ENCODE measurements at regions of chr3 and their contacts with region 1.

Region 1: DNA sequence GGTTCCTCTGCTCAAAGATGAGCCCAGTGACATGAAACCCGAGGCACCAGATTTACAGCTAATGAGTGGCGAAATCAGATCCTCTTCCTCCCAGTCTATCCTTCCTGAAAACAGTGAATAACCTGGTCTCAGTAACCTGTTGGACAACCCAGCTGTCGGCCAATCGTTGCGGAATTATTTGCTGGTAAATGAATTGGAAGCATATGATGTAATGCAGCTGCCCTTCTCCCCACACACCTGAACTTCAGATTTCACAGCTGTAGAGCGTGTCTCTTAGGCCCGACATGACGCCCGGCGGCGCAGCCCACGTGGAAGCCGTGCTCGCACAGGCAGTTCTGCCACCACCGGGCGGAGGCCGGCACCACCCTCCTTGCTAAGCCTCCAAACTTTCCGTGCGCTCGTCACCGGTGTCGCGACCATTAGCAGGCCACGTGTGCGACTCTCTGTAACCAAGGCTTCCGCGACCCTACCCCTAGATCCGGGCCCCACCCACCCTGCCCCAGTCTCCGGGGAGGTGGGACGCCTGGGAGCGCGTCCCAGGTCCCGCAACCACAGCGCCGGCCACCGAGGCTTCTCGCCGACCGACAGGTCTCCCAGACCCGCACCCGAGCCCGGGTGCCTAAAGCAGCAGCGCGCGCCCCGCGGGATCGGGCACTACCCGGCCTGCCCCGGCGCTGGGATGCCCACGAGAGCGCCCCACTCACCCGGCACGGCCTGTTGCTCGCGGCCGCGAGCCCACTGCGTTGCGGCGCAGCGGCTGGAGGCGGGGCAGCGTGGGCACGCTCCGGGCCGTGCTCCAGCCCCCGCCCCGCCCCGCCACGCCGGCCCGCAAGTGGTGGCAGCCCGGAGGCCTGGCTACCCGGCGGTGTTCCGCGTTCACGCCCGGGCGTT is at the start of gene RIOX2:
- DNase-seq: peak; percentile 90
- ATAC-seq: peak; percentile 89
- H3K4me3 Mint-ChIP-seq: peak within 1 kb of the TSS; percentile 83
- H3K27ac Mint-ChIP-seq: peak within 1 kb of the TSS; percentile 90
- H3K4me1 Mint-ChIP-seq: peaks cover 46% of the 10 kb centered on the region
- H3K27me3 Mint-ChIP-seq: no peaks in the 10 kb centered on the region
- total RNA-seq, gene RIOX2: 35.0 to 35.5 TPM

Region 2: DNA sequence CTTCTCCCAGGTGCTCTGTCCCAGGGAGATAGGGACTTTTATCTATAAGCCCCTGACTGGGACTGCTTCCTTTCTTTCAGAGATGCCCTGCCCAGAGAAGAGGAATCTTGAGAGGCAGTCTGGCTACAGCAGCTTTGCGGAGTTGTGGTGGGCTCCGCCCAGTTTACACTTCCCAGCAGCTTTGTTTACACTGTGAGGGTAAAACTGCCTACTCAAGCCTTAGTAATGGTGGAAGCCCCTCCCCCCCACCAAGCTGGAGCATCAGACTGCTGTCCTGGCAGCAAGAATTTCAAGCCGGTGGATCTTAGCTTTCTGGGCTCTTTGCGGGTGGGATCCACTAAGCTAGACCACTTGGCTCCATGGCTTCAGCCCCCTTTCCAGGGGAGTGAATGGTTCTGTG is 461.1 kb before region 1 on chr3:
- CTCF ChIA-PET with region 1: no interaction called
- POLR2A ChIA-PET with region 1: no interaction called
- intact Hi-C with region 1: no loop called
- DNase-seq: no peak
- ATAC-seq: no peak
- H3K4me3 Mint-ChIP-seq: no peak overlapping the region
- H3K27ac Mint-ChIP-seq: no peak overlapping the region
- H3K4me1 Mint-ChIP-seq: no peaks in the 10 kb centered on the region
- H3K27me3 Mint-ChIP-seq: no peaks in the 10 kb centered on the region

Region 3: GRCh38 chr3:97764407-97765238 is 207.3 kb before region 1 on chr3 and contains the start of gene ARL6:
- CTCF ChIA-PET with region 1: no interaction called
- POLR2A ChIA-PET with region 1: no interaction called
- intact Hi-C with region 1: loop called in 1 of 2 experiments (anchors 1 kb)
- DNase-seq: peak; percentile 86
- ATAC-seq: peak; percentile 95
- H3K4me3 Mint-ChIP-seq: peak within 1 kb of the TSS; percentile 97
- H3K27ac Mint-ChIP-seq: peak within 1 kb of the TSS; percentile 97
- H3K4me1 Mint-ChIP-seq: peaks cover 25% of the 10 kb centered on the region
- H3K27me3 Mint-ChIP-seq: no peaks in the 10 kb centered on the region
- total RNA-seq, gene ARL6: 6.9 TPM

Region 4: DNA sequence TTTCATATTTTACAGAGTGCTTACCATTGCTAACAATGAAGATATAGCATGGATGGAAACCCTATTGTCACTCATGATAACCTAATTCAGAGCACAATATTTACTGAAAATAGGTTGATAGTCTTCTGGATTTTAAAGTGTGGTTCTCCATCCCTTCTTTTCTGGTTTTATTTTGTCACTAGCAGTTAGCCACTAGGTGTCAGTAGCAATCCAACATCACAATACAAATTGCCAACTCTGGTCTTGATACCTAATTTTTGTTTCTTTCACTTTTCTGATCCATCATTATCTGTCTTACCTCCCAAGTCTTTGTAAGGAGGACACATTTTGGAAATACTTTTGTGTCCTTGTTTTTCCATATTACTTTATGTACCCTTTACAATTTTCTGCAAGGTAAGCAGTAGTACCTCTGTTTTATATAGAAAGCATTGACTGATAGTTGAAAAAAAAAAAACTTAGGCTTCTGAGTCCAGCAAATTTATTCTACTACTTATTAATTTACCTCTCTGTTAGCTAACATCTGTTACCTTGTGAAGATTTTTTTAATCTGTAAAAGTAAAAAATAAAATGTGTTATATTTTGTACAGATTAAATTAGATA is 178.4 kb before region 1 on chr3:
- CTCF ChIA-PET with region 1: no interaction called
- POLR2A ChIA-PET with region 1: no interaction called
- intact Hi-C with region 1: loop called in 1 of 2 experiments (anchors 1 kb)
- DNase-seq: no peak
- ATAC-seq: peak; percentile 60
- H3K4me3 Mint-ChIP-seq: no peak overlapping the region
- H3K27ac Mint-ChIP-seq: no peak overlapping the region
- H3K4me1 Mint-ChIP-seq: no peaks in the 10 kb centered on the region
- H3K27me3 Mint-ChIP-seq: no peaks in the 10 kb centered on the region

Region 5: DNA sequence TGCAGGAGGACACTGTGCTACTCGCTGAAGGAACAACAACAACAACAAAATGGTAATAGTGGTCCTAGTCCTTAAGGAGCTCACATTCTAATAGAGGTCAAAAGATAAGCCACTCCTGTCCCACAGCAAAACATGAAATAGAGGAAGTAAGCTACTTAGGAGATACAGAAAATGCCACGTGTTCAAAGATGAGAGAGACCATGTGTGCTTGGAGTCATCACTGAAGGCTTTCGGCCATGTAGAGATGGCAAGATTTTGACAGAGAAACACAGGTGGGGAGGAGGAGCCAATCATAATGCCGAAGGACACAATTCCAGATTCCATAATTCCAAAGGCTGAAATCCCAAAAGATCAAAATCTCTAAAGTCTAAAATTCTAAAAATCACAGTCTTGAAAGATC is 25.1 kb after region 1 on chr3:
- CTCF ChIA-PET with region 1: no interaction called
- POLR2A ChIA-PET with region 1: no interaction called
- intact Hi-C with region 1: no loop called
- DNase-seq: no peak
- ATAC-seq: no peak
- H3K4me3 Mint-ChIP-seq: no peak overlapping the region
- H3K27ac Mint-ChIP-seq: no peak overlapping the region
- H3K4me1 Mint-ChIP-seq: peaks cover 3% of the 10 kb centered on the region
- H3K27me3 Mint-ChIP-seq: peaks cover 2% of the 10 kb centered on the region

Measured in activated CD4-positive, alpha-beta T cell treated with anti-CD3 and anti-CD28 coated beads for 36 hours (primary cell).